PC-9 (cell line): ENCODE measurements at regions of chr7 and their contacts with region 1.

Region 1: GRCh38 chr7:99616359-99617191 is at the start of gene ZSCAN25:
- DNase-seq: peak; percentile 79 to 91
- H3K4me3 ChIP-seq: peak within 1 kb of the TSS; percentile 66
- H3K27ac ChIP-seq: no peak within 1 kb of the TSS
- H3K4me1 ChIP-seq: peaks cover 24% of the 10 kb centered on the region
- H3K27me3 ChIP-seq: 0 out of 2 replicates have a peak, but pooled peaks cover 5% of the 10 kb centered on the region
- CTCF ChIP-seq: peak; percentile 60; the same call in 1 of the 2 replicates
- total RNA-seq, gene ZSCAN25: 20.5 and 21.8 TPM in 2 replicates

Region 2: DNA sequence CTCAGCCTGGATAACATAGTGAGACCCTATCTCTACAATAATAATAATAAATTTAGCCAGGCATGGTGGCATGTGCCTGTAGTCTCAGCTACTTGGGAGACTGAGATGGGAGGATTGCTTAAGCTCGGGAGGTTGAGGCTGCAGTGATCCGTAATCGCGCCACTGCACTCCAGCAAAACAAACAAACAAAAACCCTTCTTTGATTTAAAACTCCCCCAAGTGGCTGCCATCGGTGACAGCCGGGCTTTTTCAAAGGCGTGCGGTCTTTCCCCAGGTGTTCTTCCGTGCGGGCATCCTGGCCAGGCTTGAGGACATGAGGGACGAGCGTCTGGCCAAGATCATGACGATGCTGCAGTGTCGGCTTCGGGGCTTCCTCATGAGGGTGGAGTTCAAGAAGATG is 345.9 kb before region 1 on chr7:
- CTCF ChIA-PET with region 1: no interaction called
- POLR2A ChIA-PET with region 1: no interaction called
- intact Hi-C with region 1: no loop called
- DNase-seq: no peak
- H3K4me3 ChIP-seq: no peak overlapping the region
- H3K27ac ChIP-seq: no peak overlapping the region
- H3K4me1 ChIP-seq: peaks cover 70% of the 10 kb centered on the region
- H3K27me3 ChIP-seq: no peaks in the 10 kb centered on the region
- CTCF ChIP-seq: no peak

Region 3: GRCh38 chr7:99296471-99296870 is 320.1 kb before region 1 on chr7:
- CTCF ChIA-PET with region 1: no interaction called
- POLR2A ChIA-PET with region 1: no interaction called
- intact Hi-C with region 1: no loop called
- DNase-seq: no peak
- H3K4me3 ChIP-seq: no peak overlapping the region
- H3K27ac ChIP-seq: no peak overlapping the region
- H3K4me1 ChIP-seq: no peaks in the 10 kb centered on the region
- H3K27me3 ChIP-seq: no peaks in the 10 kb centered on the region
- CTCF ChIP-seq: no peak

Region 4: DNA sequence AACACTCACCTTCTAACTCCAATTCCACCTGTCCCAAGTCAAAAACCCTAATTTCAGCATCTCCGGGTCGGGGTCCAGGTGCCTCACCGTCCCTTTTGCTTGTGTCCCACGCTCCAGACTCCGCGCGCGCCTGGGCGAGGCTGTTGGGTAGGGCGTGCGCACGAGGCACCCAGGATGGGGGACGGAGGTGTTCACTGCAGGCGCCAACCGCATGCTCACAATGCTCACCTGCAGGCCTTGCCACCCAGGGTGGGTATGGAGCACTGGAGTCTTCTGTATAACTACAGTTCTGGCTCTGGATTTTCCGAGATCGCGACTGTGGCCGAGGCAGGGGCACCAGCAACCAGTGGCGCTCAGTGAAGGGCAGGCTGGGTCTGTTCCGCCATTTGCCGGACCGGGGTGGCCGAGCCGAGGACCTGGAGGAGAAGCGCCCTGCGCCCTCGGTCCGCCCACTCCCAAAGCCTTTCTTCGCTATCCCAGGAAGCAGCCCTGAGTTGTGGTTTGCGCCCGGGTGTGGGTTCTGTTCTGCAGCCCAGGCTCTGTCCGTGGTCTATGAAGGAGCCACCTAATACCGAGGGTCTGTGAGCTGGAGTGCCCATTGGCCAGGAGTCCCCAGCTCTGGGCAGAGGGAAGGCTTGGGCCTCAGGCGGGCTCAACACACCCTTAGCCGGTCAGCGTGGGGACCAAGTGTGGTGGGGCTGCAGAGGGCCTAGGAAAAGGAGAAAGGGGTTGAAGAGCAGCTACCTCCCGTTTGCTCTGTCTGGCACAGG is 73.3 kb before region 1 on chr7:
- CTCF ChIA-PET with region 1: no interaction called
- POLR2A ChIA-PET with region 1: no interaction called
- intact Hi-C with region 1: no loop called
- DNase-seq: no peak
- H3K4me3 ChIP-seq: no peak overlapping the region
- H3K27ac ChIP-seq: no peak overlapping the region
- H3K4me1 ChIP-seq: no peaks in the 10 kb centered on the region
- H3K27me3 ChIP-seq: no peaks in the 10 kb centered on the region
- CTCF ChIP-seq: no peak

Region 5: DNA sequence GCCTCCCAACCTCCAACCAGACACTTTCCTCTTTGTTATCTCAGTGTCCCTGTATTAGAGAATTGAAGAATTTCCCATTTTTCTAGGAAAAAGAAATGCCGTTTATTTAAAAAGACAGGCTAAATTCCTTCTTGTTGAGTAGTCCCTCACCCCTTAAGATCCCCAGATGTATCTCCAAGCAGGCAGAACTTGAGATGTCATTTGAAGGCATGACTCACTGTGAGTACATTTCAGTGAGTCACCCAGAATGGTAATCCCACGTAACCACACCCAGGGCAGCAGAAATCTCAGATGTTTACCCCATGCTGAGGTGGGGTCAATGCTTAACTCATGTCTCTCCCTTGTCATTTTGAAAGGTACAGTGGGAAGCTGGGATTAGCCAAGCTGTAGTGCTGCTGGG is 53.7 kb before region 1 on chr7:
- CTCF ChIA-PET with region 1: interaction called, 3 read pairs
- POLR2A ChIA-PET with region 1: no interaction called
- intact Hi-C with region 1: loop called (anchors 2 kb)
- DNase-seq: peak; percentile 80 to 95
- H3K4me3 ChIP-seq: no peak overlapping the region
- H3K27ac ChIP-seq: peak overlapping the region; percentile 60
- H3K4me1 ChIP-seq: peaks cover 30% of the 10 kb centered on the region
- H3K27me3 ChIP-seq: no peaks in the 10 kb centered on the region
- CTCF ChIP-seq: no peak